Endothelial cell of umbilical vein (primary cell): ENCODE measurements at regions of chr11 and their contacts with region 1.

Region 1: DNA sequence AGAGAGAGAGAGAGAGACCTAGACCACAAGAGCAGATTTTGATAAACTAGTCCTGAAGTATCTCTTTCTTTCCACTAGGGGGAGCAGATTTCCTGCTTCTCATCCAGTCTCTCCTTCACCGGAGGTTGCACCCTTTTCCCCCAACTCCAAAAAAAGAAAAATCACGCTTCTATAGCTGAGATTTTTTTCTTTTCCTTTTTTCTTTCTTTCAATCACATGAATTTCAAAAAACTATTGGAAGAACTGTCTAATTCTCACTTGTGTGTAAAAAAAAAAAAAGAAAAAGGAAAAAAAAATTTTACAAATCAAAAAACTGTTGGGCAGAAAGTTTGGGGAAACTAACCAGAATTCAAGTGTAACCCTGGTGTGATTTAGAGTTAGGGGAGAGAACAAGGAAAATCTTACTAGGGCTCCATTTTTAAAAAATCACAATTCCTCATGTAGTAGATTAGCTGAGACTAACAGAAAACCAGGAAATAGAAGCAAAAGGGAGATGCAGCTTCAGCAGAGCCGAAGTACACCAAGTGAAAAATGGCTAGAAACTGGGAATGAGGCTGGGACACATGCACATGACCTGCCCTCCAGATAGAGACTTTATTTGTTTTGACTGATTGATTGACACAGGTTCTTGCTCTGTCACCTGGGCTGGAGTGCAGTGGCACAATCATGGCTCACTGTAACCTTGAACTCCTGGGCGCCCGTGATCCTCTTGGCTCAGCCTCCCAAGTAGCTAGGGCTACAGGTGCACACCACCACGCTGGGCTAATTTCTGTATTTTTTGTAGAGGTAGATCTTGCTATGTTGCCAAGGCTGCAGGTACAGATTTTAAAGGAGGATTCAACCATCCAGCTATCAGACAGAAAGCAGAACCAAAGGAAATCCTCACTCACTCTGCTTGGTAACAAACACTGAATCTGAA is 27.1 kb downstream of the SDHD start:
- DNase-seq: peak; percentile 39
- H3K4me3 ChIP-seq: no peak overlapping the region
- H3K27ac ChIP-seq: no peak overlapping the region
- H3K4me1 ChIP-seq: no peaks in the 10 kb centered on the region
- H3K27me3 ChIP-seq: no peaks in the 10 kb centered on the region
- CTCF ChIP-seq: peak; percentile 41 to 65
- POLR2A ChIP-seq: no peak

Region 2: GRCh38 chr11:112100462-112100861 is 13.3 kb before region 1 on chr11:
- CTCF ChIA-PET with region 1: interaction called, 34 read pairs
- POLR2A ChIA-PET with region 1: no interaction called
- dilution Hi-C with region 1: no loop called
- intact Hi-C with region 1: no loop called
- DNase-seq: no peak
- H3K4me3 ChIP-seq: no peak overlapping the region
- H3K27ac ChIP-seq: no peak overlapping the region
- H3K4me1 ChIP-seq: no peaks in the 10 kb centered on the region
- H3K27me3 ChIP-seq: no peaks in the 10 kb centered on the region
- CTCF ChIP-seq: no peak
- POLR2A ChIP-seq: no peak

Region 3: GRCh38 chr11:112163875-112164685 is 50.3 kb after region 1 on chr11 and contains the start of gene IL18:
- CTCF ChIA-PET with region 1: interaction called, 18 read pairs
- POLR2A ChIA-PET with region 1: interaction called, 4 read pairs
- dilution Hi-C with region 1: no loop called
- intact Hi-C with region 1: no loop called
- DNase-seq: no peak
- H3K4me3 ChIP-seq: peak within 1 kb of the TSS in 1 of 3 experiments; percentile 20
- H3K27ac ChIP-seq: peak within 1 kb of the TSS; percentile 19
- H3K4me1 ChIP-seq: peaks cover 11% of the 10 kb centered on the region
- H3K27me3 ChIP-seq: no peaks in the 10 kb centered on the region
- CTCF ChIP-seq: no peak
- POLR2A ChIP-seq: no peak
- total RNA-seq, gene IL18: 1.5 and 1.6 TPM in 2 replicates

Region 4: DNA sequence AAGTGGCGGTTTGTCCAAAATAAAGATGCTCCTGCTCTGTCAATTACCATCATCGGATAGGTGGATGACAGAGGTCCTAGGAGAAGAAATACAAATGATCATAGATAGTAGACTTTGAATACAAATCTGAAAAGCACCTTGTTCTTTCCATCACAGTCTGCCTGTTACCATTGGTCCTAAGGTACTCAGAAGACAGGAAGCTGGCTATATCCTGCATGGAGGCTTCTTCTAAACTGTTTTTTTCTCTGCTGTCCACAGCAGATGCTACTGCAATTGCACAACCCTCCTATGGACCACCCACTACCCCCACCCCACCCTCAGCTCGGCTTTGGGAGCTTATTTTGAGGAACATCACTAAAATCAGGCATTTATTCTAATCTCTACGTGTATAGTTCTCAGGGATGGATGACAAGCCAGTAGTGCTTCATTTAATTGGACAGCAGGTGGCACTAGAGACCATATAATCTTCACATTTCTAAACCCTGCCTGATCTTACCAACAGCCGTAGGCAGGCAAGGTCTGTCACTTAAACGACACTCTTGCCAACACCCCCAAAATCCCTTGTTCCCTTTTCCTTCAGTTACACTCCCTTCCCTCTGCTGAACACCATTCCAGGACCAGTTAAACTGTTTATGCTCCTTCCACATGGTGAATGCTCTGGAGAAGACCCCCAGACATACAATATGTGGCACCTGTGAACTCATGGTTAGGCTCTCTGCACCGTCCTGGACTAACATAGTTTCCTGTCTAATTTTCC is 105.9 kb after region 1 on chr11:
- CTCF ChIA-PET with region 1: interaction called, 10 read pairs
- POLR2A ChIA-PET with region 1: interaction called, 6 read pairs
- dilution Hi-C with region 1: no loop called
- intact Hi-C with region 1: loop called (anchors 1 kb)
- DNase-seq: peak; percentile 80
- H3K4me3 ChIP-seq: no peak overlapping the region
- H3K27ac ChIP-seq: no peak overlapping the region
- H3K4me1 ChIP-seq: peaks cover 11% of the 10 kb centered on the region
- H3K27me3 ChIP-seq: no peaks in the 10 kb centered on the region
- CTCF ChIP-seq: peak; percentile 57 to 60
- POLR2A ChIP-seq: no peak

Region 5: DNA sequence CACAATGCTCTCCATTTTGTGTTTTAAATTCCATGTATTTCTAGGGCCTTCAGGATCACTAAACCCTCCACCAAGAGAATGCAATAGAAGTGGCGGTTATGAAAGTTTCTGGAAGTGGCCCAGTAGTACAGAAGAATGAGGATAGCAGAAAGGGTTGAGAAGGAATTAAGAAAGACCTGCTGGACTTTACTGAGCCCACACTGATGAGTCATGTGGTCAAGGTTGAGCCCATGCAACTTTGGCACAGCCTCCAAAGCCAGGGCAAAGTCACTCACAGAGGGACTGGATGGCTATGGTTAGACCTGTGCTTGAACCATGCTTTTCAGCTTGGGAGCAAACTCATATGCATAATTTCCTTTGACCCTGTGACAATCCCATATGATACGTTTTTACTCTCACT is 249.7 kb after region 1 on chr11:
- CTCF ChIA-PET with region 1: no interaction called
- POLR2A ChIA-PET with region 1: no interaction called
- dilution Hi-C with region 1: no loop called
- intact Hi-C with region 1: no loop called
- DNase-seq: no peak
- H3K4me3 ChIP-seq: no peak overlapping the region
- H3K27ac ChIP-seq: no peak overlapping the region
- H3K4me1 ChIP-seq: no peaks in the 10 kb centered on the region
- H3K27me3 ChIP-seq: no peaks in the 10 kb centered on the region
- CTCF ChIP-seq: no peak
- POLR2A ChIP-seq: no peak

Region 6: DNA sequence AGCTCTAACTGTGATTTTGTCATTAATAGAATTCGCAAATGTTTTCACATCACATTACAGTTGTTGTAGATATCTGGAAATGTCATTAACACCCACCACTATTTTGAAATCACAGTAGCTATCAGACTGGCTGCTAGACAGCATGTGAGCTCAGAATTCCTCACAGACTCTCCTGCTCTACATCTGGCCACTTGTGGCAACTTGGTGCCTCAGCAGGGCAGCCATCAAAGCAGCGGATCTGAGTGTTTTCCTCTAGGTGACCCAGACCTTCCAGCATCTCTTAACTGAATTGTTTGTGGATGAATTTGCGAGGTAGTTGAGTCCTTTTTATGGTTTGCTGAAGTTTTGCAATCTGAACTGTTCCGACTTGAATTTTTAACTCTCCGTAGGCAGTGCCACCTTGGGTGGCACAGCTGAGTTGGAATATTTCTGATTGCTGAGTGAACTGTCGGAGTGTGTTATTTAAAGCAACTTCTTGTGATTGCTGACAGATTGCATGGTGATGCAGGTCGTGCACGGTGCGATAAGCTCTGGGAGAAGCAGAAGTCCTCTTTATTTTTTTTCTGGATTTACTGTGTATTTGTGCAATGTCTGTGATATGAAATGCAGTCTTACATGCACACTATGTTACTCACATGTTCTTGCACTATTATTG is 260.8 kb after region 1 on chr11:
- CTCF ChIA-PET with region 1: no interaction called
- POLR2A ChIA-PET with region 1: no interaction called
- dilution Hi-C with region 1: no loop called
- intact Hi-C with region 1: no loop called
- DNase-seq: no peak
- H3K4me3 ChIP-seq: no peak overlapping the region
- H3K27ac ChIP-seq: no peak overlapping the region
- H3K4me1 ChIP-seq: no peaks in the 10 kb centered on the region
- H3K27me3 ChIP-seq: no peaks in the 10 kb centered on the region
- CTCF ChIP-seq: no peak
- POLR2A ChIP-seq: no peak

Region 7: GRCh38 chr11:112401036-112401769 is 287.4 kb after region 1 on chr11:
- CTCF ChIA-PET with region 1: no interaction called
- POLR2A ChIA-PET with region 1: no interaction called
- dilution Hi-C with region 1: no loop called
- intact Hi-C with region 1: no loop called
- DNase-seq: no peak
- H3K4me3 ChIP-seq: no peak overlapping the region
- H3K27ac ChIP-seq: no peak overlapping the region
- H3K4me1 ChIP-seq: no peaks in the 10 kb centered on the region
- H3K27me3 ChIP-seq: no peaks in the 10 kb centered on the region
- CTCF ChIP-seq: no peak
- POLR2A ChIP-seq: no peak

Region 8: GRCh38 chr11:112453601-112454577 is 340.1 kb after region 1 on chr11:
- CTCF ChIA-PET with region 1: no interaction called
- POLR2A ChIA-PET with region 1: no interaction called
- dilution Hi-C with region 1: no loop called
- intact Hi-C with region 1: no loop called
- DNase-seq: peak; percentile 24
- H3K4me3 ChIP-seq: no peak overlapping the region
- H3K27ac ChIP-seq: no peak overlapping the region
- H3K4me1 ChIP-seq: no peaks in the 10 kb centered on the region
- H3K27me3 ChIP-seq: no peaks in the 10 kb centered on the region
- CTCF ChIP-seq: peak; percentile 26 to 43
- POLR2A ChIP-seq: no peak